ENCODE measurements at regions of chr2 and their contacts with region 1.

Region 1: GRCh38 chr2:229586746-229587705 is 127.3 kb downstream of the DNER start:
- DNase-seq: peak; percentile 94
- H3K4me3 Mint-ChIP-seq: peak overlapping the region; percentile 79
- H3K27ac Mint-ChIP-seq: peak overlapping the region; percentile 87
- H3K4me1 Mint-ChIP-seq: peaks cover 29% of the 10 kb centered on the region
- H3K27me3 Mint-ChIP-seq: no peaks in the 10 kb centered on the region
- CTCF ChIP-seq: peak; percentile 91

Region 2: DNA sequence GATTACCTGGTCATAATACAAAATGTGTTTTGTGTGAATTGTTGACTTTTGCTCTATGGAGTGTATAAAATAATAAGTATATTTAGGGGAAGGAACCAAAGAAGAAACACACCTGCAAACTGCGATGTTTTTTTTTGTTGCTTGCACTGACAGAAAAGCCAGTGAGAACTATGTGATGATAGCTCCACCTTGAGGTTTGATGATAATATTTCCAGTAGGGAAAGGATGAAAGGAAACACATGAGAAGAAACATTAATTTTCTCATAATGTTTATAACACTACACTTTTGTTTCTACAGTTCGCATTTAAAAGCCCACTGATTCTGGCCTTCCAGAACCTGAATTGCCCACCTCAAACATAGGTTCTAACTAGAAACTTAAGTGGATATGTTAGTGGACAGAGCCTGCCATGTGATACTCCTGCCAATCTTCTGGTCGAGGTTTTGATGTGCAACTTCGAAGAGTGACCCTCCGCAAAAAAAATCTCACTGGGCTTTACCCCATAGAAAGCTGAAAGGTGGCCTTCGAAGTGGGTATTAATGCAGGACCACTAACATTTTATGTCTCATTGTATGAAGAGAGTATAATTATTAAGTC is 929.1 kb before region 1 on chr2:
- CTCF ChIA-PET with region 1: no interaction called
- POLR2A ChIA-PET with region 1: no interaction called
- intact Hi-C with region 1: loop called (anchors 1 kb)
- DNase-seq: peak; percentile 68
- H3K4me3 Mint-ChIP-seq: no peak overlapping the region
- H3K27ac Mint-ChIP-seq: no peak overlapping the region
- H3K4me1 Mint-ChIP-seq: no peaks in the 10 kb centered on the region
- H3K27me3 Mint-ChIP-seq: peaks cover 71% of the 10 kb centered on the region
- CTCF ChIP-seq: peak; percentile 78

Region 3: GRCh38 chr2:228699400-228699799 is 887.6 kb before region 1 on chr2:
- CTCF ChIA-PET with region 1: no interaction called
- POLR2A ChIA-PET with region 1: no interaction called
- intact Hi-C with region 1: loop called (anchors 1 kb)
- DNase-seq: peak; percentile 59
- H3K4me3 Mint-ChIP-seq: no peak overlapping the region
- H3K27ac Mint-ChIP-seq: no peak overlapping the region
- H3K4me1 Mint-ChIP-seq: peaks cover 10% of the 10 kb centered on the region
- H3K27me3 Mint-ChIP-seq: no peaks in the 10 kb centered on the region
- CTCF ChIP-seq: peak; percentile 51

Region 4: DNA sequence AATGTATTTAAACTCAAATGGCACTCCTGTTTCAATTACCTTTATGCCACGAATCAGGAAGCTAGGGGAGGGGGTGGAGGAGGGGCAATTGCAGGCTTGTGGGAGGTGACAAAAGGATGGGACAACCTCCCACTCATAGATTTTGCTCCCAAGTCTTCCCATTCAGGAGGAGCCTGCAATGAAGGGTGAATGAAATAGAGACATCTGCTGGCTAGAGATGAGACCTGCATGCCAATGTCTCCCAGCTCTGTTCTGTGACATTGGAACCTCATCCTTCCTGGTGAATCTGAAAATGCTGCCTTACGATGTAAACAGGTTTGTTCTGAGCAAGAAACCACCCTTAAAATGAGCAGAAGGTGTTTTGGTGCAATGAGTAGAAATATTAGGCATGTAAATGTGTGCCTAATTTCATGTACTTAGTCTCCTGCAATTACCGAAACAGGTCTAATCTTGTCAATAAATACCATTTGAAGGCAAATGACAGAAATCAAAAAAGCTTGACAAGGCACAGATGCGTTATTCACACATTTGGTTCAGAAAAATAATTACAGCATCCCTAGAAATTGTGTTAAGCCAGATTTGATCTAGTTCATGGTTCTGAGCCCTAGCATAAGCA is 313.2 kb before region 1 on chr2:
- CTCF ChIA-PET with region 1: interaction called, 18 read pairs
- POLR2A ChIA-PET with region 1: interaction called, 10 read pairs
- intact Hi-C with region 1: loop called (anchors 2 kb)
- DNase-seq: peak; percentile 94
- H3K4me3 Mint-ChIP-seq: peak overlapping the region; percentile 57
- H3K27ac Mint-ChIP-seq: peak overlapping the region; percentile 41
- H3K4me1 Mint-ChIP-seq: peaks cover 40% of the 10 kb centered on the region
- H3K27me3 Mint-ChIP-seq: no peaks in the 10 kb centered on the region
- CTCF ChIP-seq: peak; percentile 66

Region 5: DNA sequence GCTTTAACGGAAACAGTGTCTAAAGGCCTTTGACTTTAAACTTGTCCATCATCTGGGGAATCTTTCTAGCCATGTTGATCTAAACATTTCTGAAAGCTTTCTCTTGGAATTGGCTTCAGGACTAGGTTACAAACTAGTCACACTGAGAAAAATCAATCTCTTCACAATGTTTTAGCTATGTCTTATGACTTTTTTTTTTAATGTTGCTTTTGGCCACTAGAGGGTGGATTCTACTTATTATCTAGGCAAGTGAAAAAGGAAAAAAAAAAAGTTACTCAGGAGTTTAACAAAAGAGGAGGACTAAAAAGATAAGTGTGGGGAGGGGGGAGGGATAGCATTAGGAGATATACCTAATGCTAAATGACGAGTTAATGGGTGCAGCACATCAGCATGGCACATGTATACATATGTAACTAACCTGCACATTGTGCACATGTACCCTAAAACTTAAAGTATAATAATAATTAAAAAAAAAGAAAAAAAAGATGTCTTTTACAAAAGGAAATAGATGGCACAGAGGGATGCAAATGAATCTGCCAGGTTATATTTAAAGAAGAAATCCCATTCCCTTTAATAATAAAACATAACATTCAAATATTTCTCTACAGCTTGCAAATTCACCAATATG is 155.6 kb before region 1 on chr2:
- CTCF ChIA-PET with region 1: interaction called, 59 read pairs
- POLR2A ChIA-PET with region 1: interaction called, 25 read pairs
- intact Hi-C with region 1: loop called (anchors 1 kb)
- DNase-seq: peak; percentile 69
- H3K4me3 Mint-ChIP-seq: no peak overlapping the region
- H3K27ac Mint-ChIP-seq: peak overlapping the region; percentile 75
- H3K4me1 Mint-ChIP-seq: peaks cover 32% of the 10 kb centered on the region
- H3K27me3 Mint-ChIP-seq: no peaks in the 10 kb centered on the region
- CTCF ChIP-seq: peak; percentile 48

Region 6: DNA sequence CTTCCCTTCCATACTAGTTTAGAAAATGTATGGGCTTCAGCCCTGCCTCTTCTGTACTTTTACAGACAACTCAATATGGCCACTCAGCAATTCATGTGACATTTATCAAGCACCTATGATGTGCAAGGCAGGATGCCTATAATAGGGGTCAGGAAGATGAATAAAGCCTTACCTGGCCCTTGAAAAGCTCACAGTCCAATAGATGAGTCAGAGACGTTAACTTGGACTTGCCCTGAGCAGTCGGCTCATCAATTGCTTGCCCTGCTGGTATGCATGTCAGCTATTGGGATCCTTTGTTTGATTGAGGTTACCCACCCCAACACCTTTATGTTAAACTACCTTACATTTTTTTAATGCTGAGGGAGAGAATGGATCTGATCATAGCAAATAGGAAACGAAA is 11.2 kb after region 1 on chr2:
- CTCF ChIA-PET with region 1: interaction called, 11 read pairs
- POLR2A ChIA-PET with region 1: no interaction called
- intact Hi-C with region 1: no loop called
- DNase-seq: no peak
- H3K4me3 Mint-ChIP-seq: no peak overlapping the region
- H3K27ac Mint-ChIP-seq: no peak overlapping the region
- H3K4me1 Mint-ChIP-seq: no peaks in the 10 kb centered on the region
- H3K27me3 Mint-ChIP-seq: no peaks in the 10 kb centered on the region
- CTCF ChIP-seq: no peak

Region 7: GRCh38 chr2:229714736-229715541 is 127.9 kb after region 1 on chr2:
- CTCF ChIA-PET with region 1: interaction called, 10 read pairs
- POLR2A ChIA-PET with region 1: interaction called, 3 read pairs
- intact Hi-C with region 1: loop called (anchors 2 kb)
- DNase-seq: peak; percentile 74
- H3K4me3 Mint-ChIP-seq: peak overlapping the region; percentile 70
- H3K27ac Mint-ChIP-seq: no peak overlapping the region
- H3K4me1 Mint-ChIP-seq: peaks cover 10% of the 10 kb centered on the region
- H3K27me3 Mint-ChIP-seq: peaks cover 59% of the 10 kb centered on the region
- CTCF ChIP-seq: no peak

Region 8: DNA sequence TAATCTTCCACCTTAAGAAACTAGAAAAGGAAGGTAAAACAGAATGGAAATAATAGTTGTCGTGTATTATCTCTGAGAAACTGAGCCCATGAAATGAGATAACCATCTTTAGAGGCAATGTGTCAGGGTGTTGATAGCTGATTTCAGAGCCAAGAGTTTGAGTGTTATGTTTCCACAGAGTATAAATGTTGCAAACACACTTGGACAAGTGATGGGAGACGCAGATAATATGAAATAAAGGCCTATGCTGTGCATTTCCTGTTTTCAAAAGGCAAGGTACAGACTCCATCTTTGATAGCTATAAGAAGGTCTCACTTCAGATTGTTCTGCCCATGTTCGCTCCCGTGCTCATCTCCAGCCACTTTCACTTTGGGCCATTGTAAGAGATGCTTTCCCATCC is 153.3 kb after region 1 on chr2:
- CTCF ChIA-PET with region 1: no interaction called
- POLR2A ChIA-PET with region 1: no interaction called
- intact Hi-C with region 1: no loop called
- DNase-seq: no peak
- H3K4me3 Mint-ChIP-seq: no peak overlapping the region
- H3K27ac Mint-ChIP-seq: no peak overlapping the region
- H3K4me1 Mint-ChIP-seq: no peaks in the 10 kb centered on the region
- H3K27me3 Mint-ChIP-seq: no peaks in the 10 kb centered on the region
- CTCF ChIP-seq: no peak

Measured in MCF 10A (cell line).